ENCODE measurements at regions of chr17 and their contacts with region 1.

Region 1: DNA sequence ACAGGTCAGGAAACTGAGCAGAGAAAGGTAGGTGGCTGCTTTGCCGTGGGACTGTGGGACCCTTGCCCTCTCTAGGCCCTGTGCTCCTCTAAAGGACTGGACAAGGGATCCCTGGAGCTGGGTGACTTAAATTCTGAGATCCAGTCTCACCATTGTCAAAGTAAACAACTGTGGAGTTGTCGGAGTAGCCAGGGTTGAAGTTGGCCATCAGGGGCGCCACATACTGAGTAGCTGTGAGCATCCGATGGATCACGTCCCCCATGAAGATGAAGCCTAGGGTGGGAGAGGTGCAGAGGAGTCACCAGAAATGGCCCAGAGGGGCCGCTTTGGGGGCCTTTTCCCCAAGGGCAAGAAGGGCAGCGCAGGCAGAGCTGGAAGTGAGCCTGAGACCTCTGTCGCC is 43.5 kb downstream of the PLXDC1 start:
- DNase-seq: no peak
- H3K4me3 Mint-ChIP-seq: no peak overlapping the region
- H3K27ac Mint-ChIP-seq: no peak overlapping the region
- H3K4me1 Mint-ChIP-seq: peaks cover 15% of the 10 kb centered on the region
- H3K27me3 Mint-ChIP-seq: peaks cover 84% of the 10 kb centered on the region
- CTCF ChIP-seq: peak; percentile 33

Region 2: GRCh38 chr17:39069114-39069756 is 38.7 kb before region 1 on chr17:
- CTCF ChIA-PET with region 1: no interaction called
- intact Hi-C with region 1: no loop called
- DNase-seq: peak; percentile 67
- H3K4me3 Mint-ChIP-seq: no peak overlapping the region
- H3K27ac Mint-ChIP-seq: no peak overlapping the region
- H3K4me1 Mint-ChIP-seq: peaks cover 7% of the 10 kb centered on the region
- H3K27me3 Mint-ChIP-seq: peaks cover 89% of the 10 kb centered on the region
- CTCF ChIP-seq: peak; percentile 92

Region 3: GRCh38 chr17:39082482-39082881 is 25.5 kb before region 1 on chr17:
- CTCF ChIA-PET with region 1: interaction called, 5 read pairs
- intact Hi-C with region 1: loop called (anchors 2 kb)
- DNase-seq: no peak
- H3K4me3 Mint-ChIP-seq: no peak overlapping the region
- H3K27ac Mint-ChIP-seq: no peak overlapping the region
- H3K4me1 Mint-ChIP-seq: no peaks in the 10 kb centered on the region
- H3K27me3 Mint-ChIP-seq: peaks cover 87% of the 10 kb centered on the region
- CTCF ChIP-seq: no peak